Ascending aorta (tissue), 2 donors: ENCODE measurements at regions of chr1 and their contacts with region 1.

Region 1: DNA sequence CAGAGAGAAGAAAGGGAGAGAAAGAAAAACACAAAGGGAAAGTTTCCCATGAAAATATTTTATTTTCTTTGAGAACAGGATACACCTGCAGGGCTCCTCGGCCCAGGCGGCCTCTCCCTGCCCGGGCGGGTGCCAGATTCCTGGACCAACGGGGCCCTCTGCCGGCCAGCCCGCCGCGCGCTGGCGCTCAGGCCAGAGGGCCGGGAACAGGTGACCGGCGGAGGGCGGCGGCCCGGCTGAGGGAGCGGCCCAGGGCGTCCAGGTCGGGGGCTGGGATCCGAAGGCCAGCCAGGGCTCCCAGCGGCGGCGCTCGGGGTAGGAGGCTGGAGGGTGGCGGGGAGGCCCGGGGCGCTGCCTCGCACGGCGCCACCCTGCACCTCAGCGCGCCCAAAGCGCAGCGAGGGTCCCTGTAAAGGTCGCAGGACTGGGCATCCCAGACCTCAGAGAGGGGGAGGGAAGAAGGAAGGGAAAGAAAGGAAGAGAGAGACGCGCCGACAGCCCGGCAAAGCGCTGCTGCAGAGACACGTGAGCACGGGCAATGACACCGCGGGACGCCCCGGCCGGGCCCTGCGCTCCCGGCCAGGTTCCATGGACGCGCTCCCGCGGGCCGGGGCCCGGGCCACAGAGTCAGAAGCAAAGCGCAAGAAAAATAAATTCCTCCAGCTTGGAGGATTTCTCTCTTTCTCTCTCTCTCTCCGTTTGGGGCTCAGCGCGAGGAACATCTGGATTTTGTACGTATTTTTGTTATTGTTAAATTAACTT is 927 bp downstream of the WNT9A start:
- DNase-seq: peak in 1 of 2 donors; percentile 70
- H3K4me3 ChIP-seq: peak overlapping the region; percentile 61 to 73
- H3K27ac ChIP-seq: peak overlapping the region in 1 of 2 donors; percentile 31
- H3K4me1 ChIP-seq: peaks cover 4 to 17% of the 10 kb centered on the region in 2 donors
- H3K27me3 ChIP-seq: no peaks in the 10 kb centered on the region
- CTCF ChIP-seq: peak; percentile 40 to 67 (median 64)

Region 2: DNA sequence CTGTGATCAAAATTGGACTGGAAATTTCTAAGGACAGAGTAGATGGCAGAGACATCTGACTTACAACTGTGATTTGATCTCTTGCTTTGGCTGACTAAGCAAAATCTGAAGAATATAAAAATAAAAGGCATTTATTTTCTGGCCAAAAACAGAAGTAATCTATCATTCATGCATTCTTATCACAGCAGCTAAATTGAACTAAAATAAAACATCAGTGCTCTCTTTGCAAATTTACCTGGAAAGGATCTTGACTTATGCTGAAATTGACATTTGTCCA is 464.8 kb before region 1 on chr1:
- intact Hi-C with region 1: loop called (anchors 5 kb)
- DNase-seq: no peak
- H3K4me3 ChIP-seq: no peak overlapping the region
- H3K27ac ChIP-seq: no peak overlapping the region
- H3K4me1 ChIP-seq: no peaks in the 10 kb centered on the region
- H3K27me3 ChIP-seq: no peaks in the 10 kb centered on the region
- CTCF ChIP-seq: no peak

Region 3: DNA sequence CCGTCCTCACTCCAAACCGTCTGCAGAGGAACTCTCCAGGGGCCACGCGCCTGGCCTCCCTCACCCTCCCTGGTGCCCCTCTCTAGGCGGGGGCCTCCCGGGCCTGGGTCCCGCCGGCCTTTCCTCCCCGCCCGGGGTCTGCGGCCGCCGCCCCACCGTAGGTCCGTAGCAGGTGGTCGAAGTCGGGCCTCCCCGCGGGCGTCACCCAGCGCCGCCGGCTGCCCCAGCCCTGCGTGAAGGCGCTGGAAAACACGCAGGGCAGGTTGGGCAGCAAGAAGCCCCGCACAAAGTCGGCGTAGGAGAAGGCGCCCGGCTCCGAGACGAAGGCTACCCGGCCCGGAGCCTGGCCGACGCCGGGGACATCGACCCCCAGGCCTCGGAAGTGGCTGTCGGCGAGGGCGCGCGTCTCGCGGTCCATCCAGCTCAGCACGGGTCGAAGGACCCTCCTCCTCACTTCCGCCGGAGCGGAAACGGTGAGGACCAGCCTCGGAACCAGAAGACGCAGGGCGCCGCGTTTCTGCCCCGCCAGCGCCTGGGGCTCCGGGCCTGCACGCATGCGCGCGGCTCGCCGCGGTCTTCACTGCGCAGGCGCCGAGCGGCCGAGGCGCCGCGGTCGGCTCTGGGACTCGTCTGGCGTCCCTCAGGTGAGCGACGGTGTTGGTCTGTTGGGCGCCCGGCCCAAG is 211.8 kb before region 1 on chr1 and contains the starts of genes JMJD4 and SNAP47:
- intact Hi-C with region 1: loop called (anchors 1 kb)
- DNase-seq: peak in 1 of 2 donors; percentile 95
- H3K4me3 ChIP-seq: peak within 1 kb of the TSS; percentile 81 to 93
- H3K27ac ChIP-seq: peak within 1 kb of the TSS; percentile 84 to 88
- H3K4me1 ChIP-seq: peaks cover 0 to 9% of the 10 kb centered on the region in 2 donors
- H3K27me3 ChIP-seq: no peaks in the 10 kb centered on the region
- CTCF ChIP-seq: no peak
- total RNA-seq, gene JMJD4: 10.6 TPM
- total RNA-seq, gene SNAP47: 54.0 TPM

Region 4: DNA sequence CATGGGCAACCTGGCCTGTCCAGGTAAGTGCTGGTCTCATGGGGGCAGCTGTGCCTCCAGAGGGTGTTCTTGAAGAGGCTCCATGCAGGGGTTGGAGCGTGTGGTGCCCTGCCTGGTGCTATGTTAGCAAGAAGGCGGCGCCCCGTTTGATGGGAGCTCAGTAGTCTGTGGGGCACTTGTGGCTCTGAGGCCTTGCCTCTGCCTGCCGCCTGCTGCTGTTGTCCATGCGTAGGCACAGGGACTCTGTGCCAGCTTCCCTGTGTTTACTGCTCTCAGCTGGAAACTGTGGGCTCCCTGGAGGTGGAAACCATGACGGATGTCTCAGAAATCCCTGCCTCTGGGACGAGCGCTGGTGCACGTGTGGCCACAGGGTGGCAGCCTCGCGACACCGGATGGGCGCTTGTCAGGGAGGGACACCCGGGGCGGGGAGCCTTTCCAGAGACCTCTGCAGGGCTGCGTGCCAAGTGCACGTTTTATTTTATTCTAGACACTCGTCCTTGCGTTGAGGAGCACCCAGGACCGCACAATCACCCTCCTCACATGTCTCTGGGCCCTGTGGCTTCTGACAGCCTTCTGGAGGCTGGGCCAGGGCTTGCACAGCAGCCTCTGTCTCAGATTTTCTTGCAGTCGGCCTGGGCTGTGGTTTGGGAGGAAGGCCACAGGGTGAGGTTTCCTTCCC is 184.4 kb before region 1 on chr1:
- intact Hi-C with region 1: loop called (anchors 1 kb)
- DNase-seq: peak in 1 of 2 donors; percentile 90
- H3K4me3 ChIP-seq: no peak overlapping the region
- H3K27ac ChIP-seq: no peak overlapping the region
- H3K4me1 ChIP-seq: peaks cover 0 to 3% of the 10 kb centered on the region in 2 donors
- H3K27me3 ChIP-seq: no peaks in the 10 kb centered on the region
- CTCF ChIP-seq: peak; percentile 65 to 89 (median 88)

Region 5: DNA sequence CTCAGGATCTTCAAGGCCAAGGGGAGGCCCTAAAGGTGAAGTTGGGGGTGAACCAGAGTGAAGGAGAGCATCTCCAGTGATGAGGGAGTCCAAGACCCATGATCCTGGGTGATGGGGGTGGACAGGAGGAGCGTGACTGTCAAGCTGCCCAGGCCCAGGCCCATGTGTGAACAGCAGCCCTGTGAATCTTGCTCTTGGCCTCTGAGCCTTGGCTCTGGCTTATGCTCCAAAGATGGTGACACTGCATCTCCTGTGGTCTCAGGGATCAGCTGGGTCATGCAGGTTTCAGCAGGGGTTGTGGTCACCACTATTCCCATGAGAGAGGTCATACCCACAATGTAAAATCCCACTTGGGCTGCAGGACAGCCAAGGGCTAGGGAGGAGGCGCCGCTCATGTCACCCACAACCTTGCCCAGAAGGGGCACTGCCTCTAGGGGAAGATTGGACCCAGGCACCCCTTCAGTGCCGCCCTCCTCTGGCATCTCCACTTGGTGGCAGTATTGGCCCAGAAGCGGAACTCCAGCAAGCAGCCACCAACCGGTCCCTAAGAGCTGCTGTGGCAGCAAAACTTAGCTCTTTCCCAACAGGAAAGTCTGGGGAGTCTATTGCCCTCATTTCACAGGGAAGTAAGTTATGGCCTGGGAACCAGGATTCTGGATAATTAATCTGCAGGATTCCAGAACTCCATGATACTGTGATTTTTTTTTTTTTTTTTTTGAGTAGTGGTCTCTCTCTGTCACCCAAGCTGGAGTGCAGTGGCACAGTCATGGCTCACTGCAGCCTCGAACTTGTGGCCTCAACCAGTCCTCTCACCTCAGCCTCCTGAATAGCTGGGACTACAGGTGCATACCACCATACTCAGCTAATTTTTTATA is 52.5 kb after region 1 on chr1:
- intact Hi-C with region 1: no loop called
- DNase-seq: peak; percentile 30 to 63
- H3K4me3 ChIP-seq: no peak overlapping the region
- H3K27ac ChIP-seq: no peak overlapping the region
- H3K4me1 ChIP-seq: no peaks in the 10 kb centered on the region
- H3K27me3 ChIP-seq: no peaks in the 10 kb centered on the region
- CTCF ChIP-seq: peak; percentile 17 to 57 (median 38)